Heart right ventricle (tissue), 16 donors: ENCODE measurements at regions of chr11 and their contacts with region 1.

Region 1: GRCh38 chr11:66418168-66418985 is 2.5 kb upstream of the NPAS4 start:
- DNase-seq: peak; percentile 71 to 85
- ATAC-seq: peak; percentile 78 to 97 (median 93)
- H3K4me3 ChIP-seq: no peak overlapping the region
- H3K27ac ChIP-seq: peak overlapping the region in 2 of 10 donors; percentile 43 to 55
- H3K4me1 ChIP-seq: peaks cover 0 to 52% (median 30%) of the 10 kb centered on the region in 9 donors
- H3K27me3 ChIP-seq: peaks cover 0 to 46% (median 10%) of the 10 kb centered on the region in 7 donors
- CTCF ChIP-seq: peak in 7 of 9 donors; percentile 21 to 56 (median 38)

Region 2: GRCh38 chr11:66686801-66687750 is 268.7 kb after region 1 on chr11:
- intact Hi-C with region 1: loop called in 2 of 10 experiments (anchors 10 kb)
- DNase-seq: no peak
- ATAC-seq: peak in 4 of 8 donors; percentile 9 to 44 (median 26)
- H3K4me3 ChIP-seq: no peak overlapping the region
- H3K27ac ChIP-seq: no peak overlapping the region
- H3K4me1 ChIP-seq: no peaks in the 10 kb centered on the region
- H3K27me3 ChIP-seq: no peaks in the 10 kb centered on the region
- CTCF ChIP-seq: no peak

Region 3: GRCh38 chr11:66835768-66836405 is 417.5 kb after region 1 on chr11:
- intact Hi-C with region 1: loop called in 1 of 10 experiments (anchors 10 kb)
- DNase-seq: no peak
- ATAC-seq: no peak
- H3K4me3 ChIP-seq: no peak overlapping the region
- H3K27ac ChIP-seq: no peak overlapping the region
- H3K4me1 ChIP-seq: peaks cover 0 to 8% (median 0%) of the 10 kb centered on the region in 9 donors
- H3K27me3 ChIP-seq: no peaks in the 10 kb centered on the region
- CTCF ChIP-seq: no peak